ENCODE measurements at regions of chr7 and their contacts with region 1.

Region 1: GRCh38 chr7:88111136-88111743 is 108.6 kb downstream of the SRI start:
- DNase-seq: peak; percentile 43
- H3K4me3 Mint-ChIP-seq: no peak overlapping the region
- H3K27ac Mint-ChIP-seq: no peak overlapping the region
- H3K4me1 Mint-ChIP-seq: no peaks in the 10 kb centered on the region
- H3K27me3 Mint-ChIP-seq: peaks cover 77% of the 10 kb centered on the region
- CTCF ChIP-seq: peak; percentile 51

Region 2: DNA sequence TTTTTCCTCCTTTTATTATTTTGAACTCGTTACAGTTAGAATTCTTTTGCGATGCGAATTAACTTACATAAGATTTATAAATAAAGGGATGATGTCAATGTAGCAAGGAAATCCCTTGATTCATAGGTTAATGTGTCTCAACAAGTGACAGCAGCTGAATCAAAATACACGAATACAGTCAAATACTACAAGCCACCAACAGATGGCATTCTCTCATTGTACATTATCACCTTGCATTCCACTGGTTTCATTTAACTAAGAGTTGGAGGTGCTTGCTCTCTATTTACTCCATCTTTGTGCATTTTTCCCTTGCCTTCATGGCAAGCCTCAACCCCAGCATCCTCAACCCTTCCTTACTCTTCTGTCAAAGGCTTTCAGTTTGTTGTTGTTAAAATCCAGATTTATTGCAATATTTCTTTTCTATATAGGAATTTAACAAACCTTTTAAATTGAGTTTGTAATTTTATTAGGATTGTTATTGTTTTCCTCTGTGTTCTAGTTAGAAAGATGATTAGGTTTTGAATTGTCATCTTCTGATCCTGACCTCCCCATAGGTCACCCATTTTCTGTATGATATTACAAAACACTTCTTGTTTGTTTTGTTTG is 313.3 kb before region 1 on chr7:
- CTCF ChIA-PET with region 1: interaction called, 11 read pairs
- POLR2A ChIA-PET with region 1: no interaction called
- intact Hi-C with region 1: loop called (anchors 1 kb)
- DNase-seq: peak; percentile 71
- H3K4me3 Mint-ChIP-seq: no peak overlapping the region
- H3K27ac Mint-ChIP-seq: no peak overlapping the region
- H3K4me1 Mint-ChIP-seq: no peaks in the 10 kb centered on the region
- H3K27me3 Mint-ChIP-seq: peaks cover 2% of the 10 kb centered on the region
- CTCF ChIP-seq: peak; percentile 54

Region 3: GRCh38 chr7:87853237-87853864 is 257.9 kb before region 1 on chr7:
- CTCF ChIA-PET with region 1: no interaction called
- POLR2A ChIA-PET with region 1: no interaction called
- intact Hi-C with region 1: no loop called
- DNase-seq: peak; percentile 52
- H3K4me3 Mint-ChIP-seq: no peak overlapping the region
- H3K27ac Mint-ChIP-seq: no peak overlapping the region
- H3K4me1 Mint-ChIP-seq: no peaks in the 10 kb centered on the region
- H3K27me3 Mint-ChIP-seq: no peaks in the 10 kb centered on the region
- CTCF ChIP-seq: no peak

Region 4: DNA sequence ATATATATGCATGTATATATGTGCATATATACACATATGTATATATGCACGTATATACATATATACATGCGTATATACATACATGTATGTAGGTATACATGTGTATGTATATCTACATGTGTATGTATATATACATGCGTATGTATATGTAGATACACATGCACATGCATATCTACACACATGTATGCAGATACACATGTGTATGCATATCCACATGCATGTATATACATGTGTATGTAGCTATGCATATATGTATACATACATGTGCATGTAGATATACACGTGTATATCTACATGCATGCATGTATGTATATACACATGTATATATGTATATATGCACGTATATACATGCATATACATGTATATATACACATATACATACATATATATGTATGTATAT is 291.3 kb after region 1 on chr7:
- CTCF ChIA-PET with region 1: no interaction called
- POLR2A ChIA-PET with region 1: no interaction called
- intact Hi-C with region 1: no loop called
- DNase-seq: no peak
- H3K4me3 Mint-ChIP-seq: no peak overlapping the region
- H3K27ac Mint-ChIP-seq: no peak overlapping the region
- H3K4me1 Mint-ChIP-seq: no peaks in the 10 kb centered on the region
- H3K27me3 Mint-ChIP-seq: peaks cover 11% of the 10 kb centered on the region
- CTCF ChIP-seq: no peak

Region 5: DNA sequence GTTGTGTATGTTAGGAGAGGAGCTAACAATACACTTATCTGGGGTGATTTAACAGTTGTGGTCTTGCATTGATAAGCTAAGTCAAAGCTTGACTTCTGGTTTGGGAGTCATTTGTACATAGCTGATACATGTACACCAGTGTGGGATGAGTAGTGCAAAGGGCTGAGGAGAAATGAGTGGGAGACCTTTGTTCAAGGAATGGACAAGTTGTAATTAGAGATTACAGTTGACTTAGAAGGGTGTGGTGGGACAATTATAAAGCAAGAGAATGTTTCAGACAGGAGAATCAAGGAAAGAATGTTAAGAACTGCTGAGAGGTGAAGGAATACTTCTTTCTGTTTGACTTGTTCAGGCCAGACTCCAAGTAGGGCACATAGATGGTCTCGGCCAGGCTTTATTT is 405.2 kb after region 1 on chr7:
- CTCF ChIA-PET with region 1: interaction called, 10 read pairs
- POLR2A ChIA-PET with region 1: no interaction called
- intact Hi-C with region 1: no loop called
- DNase-seq: no peak
- H3K4me3 Mint-ChIP-seq: no peak overlapping the region
- H3K27ac Mint-ChIP-seq: no peak overlapping the region
- H3K4me1 Mint-ChIP-seq: no peaks in the 10 kb centered on the region
- H3K27me3 Mint-ChIP-seq: peaks cover 59% of the 10 kb centered on the region
- CTCF ChIP-seq: no peak

Measured in MCF 10A (cell line).